Kidney (tissue), 22 donors: ENCODE measurements at regions of chr6 and their contacts with region 1.

Region 1: GRCh38 chr6:31545291-31545690 is 1.1 kb downstream of the ATP6V1G2 start:
- DNase-seq: no peak
- H3K4me3 ChIP-seq: no peak overlapping the region
- H3K27ac ChIP-seq: no peak overlapping the region
- H3K4me1 ChIP-seq: peaks cover 0 to 18% (median 11%) of the 10 kb centered on the region in 3 donors
- H3K27me3 ChIP-seq: no peaks in the 10 kb centered on the region
- CTCF ChIP-seq: no peak

Region 2: DNA sequence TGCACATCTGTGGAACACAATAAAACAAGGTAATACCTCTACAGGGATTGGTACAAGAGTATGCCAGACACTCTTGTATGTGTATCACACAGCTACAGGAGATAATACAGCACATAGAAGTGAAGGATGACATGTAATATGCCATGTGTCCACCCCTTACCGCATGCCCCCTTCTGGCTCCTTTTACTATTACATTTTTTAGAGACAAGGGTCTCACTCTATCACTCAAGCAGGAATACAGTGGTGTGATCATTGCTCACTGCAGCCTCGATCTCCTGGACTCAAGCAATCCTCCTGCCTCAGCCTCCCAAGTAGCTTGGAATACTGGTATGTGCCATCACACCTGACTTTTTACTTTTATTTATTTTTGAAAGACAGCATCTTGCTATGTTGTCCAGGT is 51.7 kb after region 1 on chr6:
- intact Hi-C with region 1: loop called (anchors 2 kb)
- DNase-seq: no peak
- H3K4me3 ChIP-seq: no peak overlapping the region
- H3K27ac ChIP-seq: no peak overlapping the region
- H3K4me1 ChIP-seq: peaks cover 0 to 2% (median 0%) of the 10 kb centered on the region in 3 donors
- H3K27me3 ChIP-seq: no peaks in the 10 kb centered on the region
- CTCF ChIP-seq: no peak

Region 3: GRCh38 chr6:31631681-31632278 is 86.5 kb after region 1 on chr6:
- intact Hi-C with region 1: no loop called
- DNase-seq: peak in 1 of 5 donors; percentile 80
- H3K4me3 ChIP-seq: no peak overlapping the region
- H3K27ac ChIP-seq: no peak overlapping the region
- H3K4me1 ChIP-seq: no peaks in the 10 kb centered on the region
- H3K27me3 ChIP-seq: no peaks in the 10 kb centered on the region
- CTCF ChIP-seq: no peak

Region 4: GRCh38 chr6:31717499-31718222 is 172.4 kb after region 1 on chr6:
- intact Hi-C with region 1: no loop called
- DNase-seq: peak in 2 of 5 donors; percentile 43 to 47
- H3K4me3 ChIP-seq: no peak overlapping the region
- H3K27ac ChIP-seq: no peak overlapping the region
- H3K4me1 ChIP-seq: no peaks in the 10 kb centered on the region
- H3K27me3 ChIP-seq: no peaks in the 10 kb centered on the region
- CTCF ChIP-seq: no peak